ENCODE measurements at regions of chr1 and their contacts with region 1.

Region 1: GRCh38 chr1:116472431-116472961 is 98.3 kb downstream of the CD58 start:
- DNase-seq: no peak
- ATAC-seq: no peak
- H3K4me3 ChIP-seq: no peak overlapping the region
- H3K27ac ChIP-seq: peak overlapping the region in 2 of 4 donors; percentile 45 to 56
- H3K4me1 ChIP-seq: peaks cover 52% of the 10 kb centered on the region
- H3K27me3 ChIP-seq: no peaks in the 10 kb centered on the region
- CTCF ChIP-seq: no peak
- POLR2A ChIP-seq: no peak

Region 2: DNA sequence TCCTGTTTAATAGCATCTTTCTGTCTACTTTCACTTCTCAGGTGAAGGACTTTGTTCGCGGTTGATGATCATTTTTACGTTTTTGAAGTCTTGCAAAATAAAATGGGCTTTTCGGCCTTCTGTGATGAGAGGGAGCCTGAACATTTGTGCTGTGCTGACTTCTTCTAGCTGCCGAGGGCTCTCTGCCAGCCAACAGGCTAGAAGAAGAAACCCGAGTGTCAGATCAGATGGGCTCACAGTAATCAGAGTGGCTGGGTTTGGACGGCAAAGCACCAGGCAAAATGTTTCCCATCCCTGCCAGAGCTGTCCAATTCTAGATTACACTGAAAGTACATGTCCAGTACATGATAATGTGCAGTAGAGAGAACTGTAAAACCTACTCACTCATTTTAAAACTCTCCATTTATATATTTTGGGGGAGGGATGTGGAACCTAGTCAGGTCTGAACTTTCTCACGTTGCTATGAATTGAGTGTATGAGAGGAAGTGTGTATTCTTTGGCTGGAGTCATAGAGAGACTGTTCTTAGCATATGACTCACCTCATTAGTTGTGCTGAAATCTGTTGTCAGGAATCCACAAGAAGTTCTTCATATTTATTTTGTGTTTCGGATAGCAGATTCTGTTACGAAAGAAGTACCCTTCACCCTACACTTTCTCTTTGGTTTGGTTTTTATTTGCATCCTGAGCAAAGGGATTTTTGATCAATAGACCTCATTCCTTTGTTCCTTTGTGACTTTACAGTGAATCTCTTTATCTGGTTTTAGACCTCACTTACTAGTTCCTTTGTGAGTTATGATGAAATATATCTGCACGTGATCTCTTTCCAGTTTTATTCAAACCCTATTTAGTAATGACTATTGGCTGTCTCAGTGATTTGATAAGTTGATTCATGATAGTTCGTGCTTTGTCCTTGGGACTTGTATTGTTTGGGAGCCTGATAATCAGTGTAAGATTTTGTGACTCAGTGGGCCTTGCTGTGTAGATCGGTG is 94.7 kb before region 1 on chr1:
- intact Hi-C with region 1: no loop called
- DNase-seq: peak; percentile 41 to 67 (median 62)
- ATAC-seq: peak; percentile 34
- H3K4me3 ChIP-seq: no peak overlapping the region
- H3K27ac ChIP-seq: peak overlapping the region; percentile 79 to 98 (median 90)
- H3K4me1 ChIP-seq: peaks cover 87% of the 10 kb centered on the region
- H3K27me3 ChIP-seq: no peaks in the 10 kb centered on the region
- CTCF ChIP-seq: no peak
- POLR2A ChIP-seq: peak in 1 of 3 donors; percentile 46

Region 3: GRCh38 chr1:116426401-116426800 is 46.1 kb before region 1 on chr1:
- intact Hi-C with region 1: loop called (anchors 10 kb)
- DNase-seq: no peak
- ATAC-seq: no peak
- H3K4me3 ChIP-seq: no peak overlapping the region
- H3K27ac ChIP-seq: no peak overlapping the region
- H3K4me1 ChIP-seq: no peaks in the 10 kb centered on the region
- H3K27me3 ChIP-seq: no peaks in the 10 kb centered on the region
- CTCF ChIP-seq: no peak
- POLR2A ChIP-seq: no peak

Measured in body of pancreas (tissue), 4 donors.